Esophagus muscularis mucosa (tissue), 4 donors: ENCODE measurements at regions of chr19 and their contacts with region 1.

Region 1: GRCh38 chr19:48795055-48795684 is 15.7 kb downstream of the BCAT2 start:
- DNase-seq: peak; percentile 97
- H3K4me3 ChIP-seq: peak overlapping the region; percentile 51 to 66 (median 54)
- H3K27ac ChIP-seq: peak overlapping the region; percentile 86 to 92 (median 89)
- H3K4me1 ChIP-seq: peaks cover 16 to 28% (median 23%) of the 10 kb centered on the region in 4 donors
- H3K27me3 ChIP-seq: no peaks in the 10 kb centered on the region
- CTCF ChIP-seq: peak; percentile 96 to 97 (median 97)
- EP300 ChIP-seq: no peak
- POLR2A ChIP-seq: no peak

Region 2: DNA sequence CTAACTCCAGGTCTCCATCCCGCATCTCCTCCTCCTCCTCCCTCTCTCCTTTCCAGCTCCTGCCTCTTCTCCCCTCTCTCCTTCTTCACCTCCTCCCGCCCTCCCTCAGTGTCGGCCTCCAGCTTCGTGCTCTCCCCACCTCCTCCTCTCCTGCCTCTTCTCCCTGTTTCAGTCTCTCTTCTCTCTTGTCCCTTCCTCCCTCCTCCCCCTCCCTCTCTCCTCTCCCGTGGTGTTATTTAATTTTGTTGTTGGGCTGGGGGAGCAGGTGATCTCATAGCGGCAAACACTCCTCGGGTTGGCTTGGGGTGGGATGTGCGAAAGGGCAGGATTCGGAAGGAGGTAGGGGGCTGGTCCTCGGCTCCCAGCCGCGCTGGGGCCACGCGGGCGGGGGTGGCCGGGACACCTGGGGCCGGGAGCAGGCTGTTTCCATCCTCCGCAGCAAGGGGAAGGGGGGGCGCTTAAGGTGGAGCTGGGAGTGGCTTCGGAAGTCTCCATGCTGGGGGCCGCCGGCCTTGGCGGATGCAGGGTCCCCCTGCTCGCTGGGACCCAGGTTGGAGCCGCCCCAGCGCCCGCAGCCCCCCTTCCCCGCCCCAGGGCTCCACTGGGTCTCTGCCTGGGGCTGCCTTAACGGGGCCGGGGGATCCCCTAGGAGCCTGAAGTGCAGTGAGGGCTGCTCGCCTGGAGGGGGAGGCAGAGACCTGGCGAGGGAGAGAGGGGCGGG is 149.0 kb before region 1 on chr19 and contains the start of gene CA11:
- intact Hi-C with region 1: loop called (anchors 10 kb)
- DNase-seq: no peak
- H3K4me3 ChIP-seq: peak within 1 kb of the TSS; percentile 63 to 73 (median 67)
- H3K27ac ChIP-seq: peak within 1 kb of the TSS; percentile 89 to 94 (median 91)
- H3K4me1 ChIP-seq: peaks cover 17 to 29% (median 26%) of the 10 kb centered on the region in 4 donors
- H3K27me3 ChIP-seq: no peaks in the 10 kb centered on the region
- CTCF ChIP-seq: peak; percentile 92 to 98 (median 96)
- EP300 ChIP-seq: no peak
- POLR2A ChIP-seq: no peak
- total RNA-seq, gene CA11: 11.9 to 16.5 (median 14.9) TPM

Region 3: GRCh38 chr19:48685583-48685982 is 109.6 kb before region 1 on chr19:
- intact Hi-C with region 1: no loop called
- DNase-seq: no peak
- H3K4me3 ChIP-seq: no peak overlapping the region
- H3K27ac ChIP-seq: no peak overlapping the region
- H3K4me1 ChIP-seq: no peaks in the 10 kb centered on the region
- H3K27me3 ChIP-seq: no peaks in the 10 kb centered on the region
- CTCF ChIP-seq: no peak
- EP300 ChIP-seq: no peak
- POLR2A ChIP-seq: no peak

Region 4: GRCh38 chr19:48746738-48747575 is 48.2 kb before region 1 on chr19 and contains the start of gene IZUMO1:
- intact Hi-C with region 1: no loop called
- DNase-seq: no peak
- H3K4me3 ChIP-seq: peak within 1 kb of the TSS; percentile 34 to 55 (median 40)
- H3K27ac ChIP-seq: peak within 1 kb of the TSS; percentile 45 to 65 (median 54)
- H3K4me1 ChIP-seq: peaks cover 9 to 18% (median 12%) of the 10 kb centered on the region in 4 donors
- H3K27me3 ChIP-seq: peaks cover 0 to 65% (median 18%) of the 10 kb centered on the region in 4 donors
- CTCF ChIP-seq: no peak
- EP300 ChIP-seq: no peak
- POLR2A ChIP-seq: no peak
- total RNA-seq, gene IZUMO1: not detected

Region 5: GRCh38 chr19:48835734-48836088 is 40.5 kb after region 1 on chr19:
- intact Hi-C with region 1: loop called (anchors 2 kb)
- DNase-seq: peak; percentile 99
- H3K4me3 ChIP-seq: peak overlapping the region; percentile 40 to 58 (median 50)
- H3K27ac ChIP-seq: peak overlapping the region; percentile 72 to 83 (median 79)
- H3K4me1 ChIP-seq: peaks cover 18 to 27% (median 25%) of the 10 kb centered on the region in 4 donors
- H3K27me3 ChIP-seq: no peaks in the 10 kb centered on the region
- CTCF ChIP-seq: peak; percentile 93 to 98 (median 94)
- EP300 ChIP-seq: no peak
- POLR2A ChIP-seq: no peak

Region 6: DNA sequence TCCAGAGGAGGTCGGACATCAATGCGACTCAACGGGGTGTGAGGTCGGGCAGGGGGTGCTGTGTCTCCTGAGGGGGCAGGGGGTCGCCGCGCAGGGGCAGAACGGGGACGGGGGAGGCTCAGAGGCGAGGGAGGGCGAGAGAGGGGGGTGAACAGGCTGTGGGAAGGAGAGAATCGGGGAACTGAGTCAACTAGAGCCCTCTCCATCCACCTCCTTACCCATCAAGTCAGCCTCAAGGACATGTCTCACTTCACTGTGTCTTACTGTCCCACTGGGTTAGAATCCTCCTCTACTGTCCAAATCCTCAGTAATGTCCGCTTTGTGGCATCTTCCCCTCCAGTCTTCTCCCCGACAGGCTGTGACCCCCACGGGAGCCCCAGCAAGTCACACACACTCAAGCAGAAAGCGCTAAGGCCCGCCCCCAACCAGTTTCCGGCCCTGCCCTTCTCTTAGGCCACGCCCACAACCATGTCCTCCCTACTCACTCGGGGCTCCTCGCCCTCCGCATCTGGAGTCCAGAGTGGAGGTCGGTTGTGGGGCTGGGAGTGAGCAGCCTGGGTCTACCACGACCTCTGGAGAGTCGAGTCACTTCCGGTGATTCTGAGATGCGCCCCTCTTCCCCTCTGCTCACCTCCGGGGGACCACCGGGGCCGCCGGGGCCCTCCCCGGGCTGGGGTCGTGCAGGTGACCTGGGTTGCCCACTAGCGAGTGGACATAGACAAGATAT is 64.0 kb after region 1 on chr19:
- intact Hi-C with region 1: no loop called
- DNase-seq: no peak
- H3K4me3 ChIP-seq: peak overlapping the region in 2 of 4 donors; percentile 12 to 23
- H3K27ac ChIP-seq: no peak overlapping the region
- H3K4me1 ChIP-seq: peaks cover 0 to 4% (median 0%) of the 10 kb centered on the region in 4 donors
- H3K27me3 ChIP-seq: no peaks in the 10 kb centered on the region
- CTCF ChIP-seq: no peak
- EP300 ChIP-seq: no peak
- POLR2A ChIP-seq: no peak